ENCODE measurements at regions of chr21 and their contacts with region 1.

Region 1: GRCh38 chr21:42309753-42310221 is 5.4 kb downstream of the TFF3 start:
- DNase-seq: no peak
- ATAC-seq: peak; percentile 86
- H3K4me3 ChIP-seq: no peak overlapping the region
- H3K27ac ChIP-seq: no peak overlapping the region
- H3K4me1 ChIP-seq: no peaks in the 10 kb centered on the region
- H3K27me3 ChIP-seq: no peaks in the 10 kb centered on the region
- CTCF ChIP-seq: peak; percentile 77 to 92 (median 90)
- EP300 ChIP-seq: no peak
- POLR2A ChIP-seq: no peak
- RAD21 ChIP-seq: peak; percentile 90

Region 2: GRCh38 chr21:42110691-42111469 is 198.9 kb before region 1 on chr21:
- CTCF ChIA-PET with region 1: no interaction called
- POLR2A ChIA-PET with region 1: no interaction called
- RAD21 ChIA-PET with region 1: no interaction called
- SMC1A ChIA-PET with region 1: no interaction called
- in situ Hi-C with region 1: no loop called
- intact Hi-C with region 1: no loop called
- DNase-seq: no peak
- ATAC-seq: no peak
- H3K4me3 ChIP-seq: no peak overlapping the region
- H3K27ac ChIP-seq: no peak overlapping the region
- H3K4me1 ChIP-seq: peaks cover 12% of the 10 kb centered on the region
- H3K27me3 ChIP-seq: peaks cover 0 to 2% of the 10 kb centered on the region in 2 experiments; a peak in 2 of 4 replicates
- CTCF ChIP-seq: no peak
- EP300 ChIP-seq: no peak
- POLR2A ChIP-seq: no peak
- RAD21 ChIP-seq: no peak

Region 3: GRCh38 chr21:42164064-42164789 is 145.6 kb before region 1 on chr21:
- CTCF ChIA-PET with region 1: interaction called, 8 read pairs
- POLR2A ChIA-PET with region 1: no interaction called
- RAD21 ChIA-PET with region 1: interaction called, 8 read pairs
- SMC1A ChIA-PET with region 1: interaction called, 10 read pairs
- in situ Hi-C with region 1: no loop called
- intact Hi-C with region 1: no loop called
- DNase-seq: no peak
- ATAC-seq: peak; percentile 99
- H3K4me3 ChIP-seq: no peak overlapping the region
- H3K27ac ChIP-seq: no peak overlapping the region
- H3K4me1 ChIP-seq: no peaks in the 10 kb centered on the region
- H3K27me3 ChIP-seq: peaks cover 2 to 3% of the 10 kb centered on the region in 2 experiments; a peak in 3 of 4 replicates
- CTCF ChIP-seq: peak; percentile 73 to 90 (median 78)
- EP300 ChIP-seq: no peak
- POLR2A ChIP-seq: no peak
- RAD21 ChIP-seq: peak; percentile 99

Region 4: DNA sequence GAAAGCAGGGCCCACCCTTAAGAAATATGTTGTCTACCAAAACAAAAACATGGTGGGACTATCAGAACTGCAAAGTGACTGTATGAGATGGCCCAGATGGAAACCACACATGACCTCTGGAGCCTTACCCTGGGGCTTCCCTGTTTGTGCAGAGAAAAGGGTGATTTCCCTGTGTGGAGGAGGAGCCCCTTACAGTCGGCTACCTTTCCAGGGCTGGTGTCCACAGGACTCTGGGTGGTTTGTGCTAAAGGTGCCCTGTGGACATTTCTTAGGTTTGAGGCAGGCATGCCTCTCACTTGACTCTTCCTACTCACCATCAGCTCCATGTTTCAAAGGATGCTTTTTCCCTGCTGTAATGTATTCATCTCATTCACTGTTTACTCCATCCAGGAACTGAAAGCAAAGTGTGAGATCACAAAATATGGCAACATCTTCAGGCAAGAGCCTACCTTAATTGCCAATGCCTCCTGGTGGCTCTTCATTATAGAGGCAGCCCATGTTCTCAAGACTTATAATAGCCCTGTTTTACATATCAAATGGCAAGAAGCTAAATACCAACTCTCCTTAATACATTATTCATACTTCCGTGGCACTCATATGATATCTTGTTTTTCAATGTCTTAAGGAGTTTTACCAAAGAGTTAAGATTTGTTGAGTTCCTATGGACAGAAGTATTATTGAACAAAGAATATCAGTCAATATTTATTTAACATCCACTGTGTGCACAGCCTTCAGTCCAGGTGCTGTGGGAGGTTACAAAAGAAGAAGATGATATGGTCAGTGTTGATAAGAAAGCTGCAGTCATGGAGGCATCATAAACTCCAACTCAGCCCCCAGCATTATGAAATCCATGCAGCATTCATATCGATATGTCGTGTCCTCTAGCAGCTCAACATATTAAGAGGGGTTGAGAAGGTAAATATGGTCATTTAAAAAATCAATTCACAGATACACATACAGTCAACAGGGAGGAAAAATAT is 20.9 kb after region 1 on chr21:
- CTCF ChIA-PET with region 1: interaction called, 22 read pairs
- POLR2A ChIA-PET with region 1: no interaction called
- RAD21 ChIA-PET with region 1: interaction called, 9 read pairs
- SMC1A ChIA-PET with region 1: interaction called, 19 read pairs
- in situ Hi-C with region 1: no loop called
- intact Hi-C with region 1: no loop called
- DNase-seq: no peak
- ATAC-seq: peak; percentile 94
- H3K4me3 ChIP-seq: no peak overlapping the region
- H3K27ac ChIP-seq: no peak overlapping the region
- H3K4me1 ChIP-seq: peaks cover 3% of the 10 kb centered on the region; the same call in 1 of the 2 replicates
- H3K27me3 ChIP-seq: no peaks in the 10 kb centered on the region
- CTCF ChIP-seq: no peak; a peak in 1 of 6 replicates
- EP300 ChIP-seq: no peak
- POLR2A ChIP-seq: no peak
- RAD21 ChIP-seq: 0 out of 2 replicates have a peak, but pooled peaks have one; percentile 20

Region 5: DNA sequence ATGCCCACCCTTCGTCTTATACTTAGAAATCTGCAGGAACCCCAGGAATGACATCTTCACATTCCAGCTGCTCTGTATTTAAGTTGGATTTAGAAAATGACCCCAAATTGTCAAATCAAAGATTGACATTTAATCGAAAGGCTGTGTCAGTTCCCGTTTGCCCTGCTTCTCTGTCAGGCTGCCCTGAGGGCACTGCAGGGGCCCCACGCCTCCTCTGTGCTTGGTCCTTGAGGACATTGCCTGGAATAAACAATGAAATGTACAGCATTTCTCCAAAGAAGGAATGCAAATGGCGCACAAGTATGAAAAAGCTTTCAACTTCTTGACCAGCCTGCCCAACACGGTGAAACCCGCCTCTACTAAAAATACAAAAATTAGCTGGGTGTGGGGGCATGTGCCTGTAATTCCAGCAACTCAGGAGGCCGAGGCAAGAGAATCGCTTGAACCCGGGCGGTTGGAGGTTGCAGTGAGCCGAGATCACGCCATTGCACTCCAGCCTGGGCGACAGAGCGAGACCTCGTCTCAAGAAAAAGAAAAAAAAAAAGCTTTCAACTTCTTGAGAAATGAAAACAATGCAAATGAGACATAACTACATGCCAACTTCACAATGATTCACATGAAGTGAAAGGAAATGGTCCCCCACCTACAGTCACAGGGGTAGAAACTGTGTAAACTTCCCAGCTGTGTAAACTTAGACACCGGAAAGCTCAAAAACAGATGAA is 83.1 kb after region 1 on chr21:
- CTCF ChIA-PET with region 1: interaction called, 20 read pairs
- POLR2A ChIA-PET with region 1: no interaction called
- RAD21 ChIA-PET with region 1: interaction called, 4 read pairs
- SMC1A ChIA-PET with region 1: interaction called, 3 read pairs
- in situ Hi-C with region 1: no loop called
- intact Hi-C with region 1: no loop called
- DNase-seq: peak; percentile 96
- ATAC-seq: peak; percentile 91
- H3K4me3 ChIP-seq: peak overlapping the region; percentile 33; the same call in 1 of the 2 replicates
- H3K27ac ChIP-seq: peak overlapping the region; percentile 91
- H3K4me1 ChIP-seq: peaks cover 53% of the 10 kb centered on the region
- H3K27me3 ChIP-seq: no peaks in the 10 kb centered on the region
- CTCF ChIP-seq: no peak
- EP300 ChIP-seq: peak in 1 of 2 experiments; percentile 13; a peak in 1 of 4 replicates
- POLR2A ChIP-seq: no peak
- RAD21 ChIP-seq: peak; percentile 34

Region 6: DNA sequence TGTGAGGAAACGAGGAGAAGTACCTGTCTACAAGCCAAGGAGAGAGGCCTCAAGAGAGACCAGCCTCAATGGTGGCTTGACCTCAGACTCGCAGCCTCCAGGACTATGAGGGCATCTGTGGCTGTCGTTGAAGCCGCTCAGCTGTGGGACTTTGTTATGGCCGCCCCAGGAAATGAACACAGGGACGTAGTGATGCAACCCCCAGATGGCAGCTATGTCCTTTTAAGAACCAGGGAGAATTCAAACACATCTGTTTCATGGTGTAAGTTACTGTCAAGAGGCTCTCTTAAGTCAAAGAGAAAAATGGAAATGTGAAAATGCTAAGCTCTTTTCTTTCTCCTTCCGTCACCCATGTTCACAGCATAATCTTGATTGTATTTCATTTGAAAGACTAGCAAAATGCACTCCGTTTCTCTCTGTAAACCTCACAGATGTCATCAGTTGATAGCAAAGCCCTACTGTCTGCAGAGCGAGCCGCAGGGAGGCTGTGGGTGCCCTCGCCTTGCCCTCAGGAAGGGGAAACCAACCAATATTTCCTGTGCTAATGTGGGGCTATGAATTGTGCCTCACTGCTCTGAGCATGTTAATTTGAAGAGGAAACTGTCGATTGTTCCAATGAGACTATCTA is 115.2 kb after region 1 on chr21:
- CTCF ChIA-PET with region 1: interaction called, 19 read pairs
- POLR2A ChIA-PET with region 1: interaction called, 4 read pairs
- RAD21 ChIA-PET with region 1: interaction called, 11 read pairs
- SMC1A ChIA-PET with region 1: interaction called, 15 read pairs
- in situ Hi-C with region 1: no loop called
- intact Hi-C with region 1: no loop called
- DNase-seq: no peak
- ATAC-seq: peak; percentile 66
- H3K4me3 ChIP-seq: 0 out of 2 replicates have a peak overlapping the region, but pooled peaks have one; percentile 5
- H3K27ac ChIP-seq: peak overlapping the region; percentile 89
- H3K4me1 ChIP-seq: peaks cover 53% of the 10 kb centered on the region
- H3K27me3 ChIP-seq: no peaks in the 10 kb centered on the region
- CTCF ChIP-seq: no peak
- EP300 ChIP-seq: no peak
- POLR2A ChIP-seq: no peak; the same call in 1 of the 2 replicates
- RAD21 ChIP-seq: 0 out of 2 replicates have a peak, but pooled peaks have one; percentile 4

Region 7: DNA sequence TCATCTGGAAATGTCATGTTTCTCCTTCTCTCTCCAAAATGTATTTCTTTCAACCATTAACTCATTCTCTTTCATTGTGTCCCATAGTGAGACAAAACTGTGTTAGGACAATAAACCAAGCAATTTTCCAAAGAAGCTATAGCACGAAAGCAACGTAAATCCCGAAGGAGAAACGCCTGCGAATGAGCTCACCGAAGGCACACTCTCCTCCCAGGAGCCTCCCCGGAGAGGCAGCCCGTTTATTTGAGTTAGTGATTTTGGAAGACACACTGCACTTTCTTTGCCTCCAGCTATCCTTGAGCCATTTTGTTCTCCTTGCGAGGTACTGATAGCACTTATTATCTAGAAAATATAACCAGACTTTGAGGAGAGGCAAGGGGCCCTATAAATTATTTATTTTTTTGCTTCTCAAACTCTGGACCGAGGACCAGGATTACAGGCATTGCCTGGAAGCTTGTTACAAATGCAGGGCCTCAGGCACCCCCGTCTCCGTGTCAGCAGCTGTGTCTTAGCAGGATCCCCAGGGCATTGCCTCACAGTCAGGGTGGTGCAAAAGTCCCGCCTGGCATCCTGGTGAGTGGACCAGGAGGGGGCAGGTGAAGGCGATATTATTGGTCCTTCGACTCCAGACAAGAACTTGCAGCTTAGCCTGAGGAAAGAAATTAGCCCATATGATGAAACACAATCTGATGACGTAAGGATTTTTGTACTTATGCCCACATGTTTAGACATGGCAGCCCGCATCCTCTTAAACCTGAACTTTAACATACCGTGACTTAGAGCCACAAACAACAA is 145.2 kb after region 1 on chr21:
- CTCF ChIA-PET with region 1: interaction called, 37 read pairs
- POLR2A ChIA-PET with region 1: no interaction called
- RAD21 ChIA-PET with region 1: interaction called, 17 read pairs
- SMC1A ChIA-PET with region 1: interaction called, 22 read pairs
- in situ Hi-C with region 1: no loop called
- intact Hi-C with region 1: loop called (anchors 1 kb)
- DNase-seq: no peak
- ATAC-seq: no peak
- H3K4me3 ChIP-seq: no peak overlapping the region
- H3K27ac ChIP-seq: no peak overlapping the region
- H3K4me1 ChIP-seq: peaks cover 8% of the 10 kb centered on the region
- H3K27me3 ChIP-seq: no peaks in the 10 kb centered on the region
- CTCF ChIP-seq: no peak
- EP300 ChIP-seq: no peak
- POLR2A ChIP-seq: no peak
- RAD21 ChIP-seq: peak; percentile 27; the same call in 1 of the 2 replicates